ENCODE measurements at regions of chr9 and their contacts with region 1.

Region 1: GRCh38 chr9:70868661-70869652 is 252.5 kb downstream of the TRPM3 start:
- DNase-seq: no peak
- H3K4me3 ChIP-seq: peak overlapping the region; percentile 51
- H3K27ac ChIP-seq: no peak overlapping the region
- H3K4me1 ChIP-seq: no peaks in the 10 kb centered on the region
- H3K27me3 ChIP-seq: peaks cover 22% of the 10 kb centered on the region
- CTCF ChIP-seq: no peak

Region 2: GRCh38 chr9:70747261-70747718 is 121.7 kb before region 1 on chr9:
- intact Hi-C with region 1: no loop called
- DNase-seq: no peak
- H3K4me3 ChIP-seq: no peak overlapping the region
- H3K27ac ChIP-seq: no peak overlapping the region
- H3K4me1 ChIP-seq: no peaks in the 10 kb centered on the region
- H3K27me3 ChIP-seq: no peaks in the 10 kb centered on the region
- CTCF ChIP-seq: no peak

Region 3: GRCh38 chr9:70811638-70812037 is 57.3 kb before region 1 on chr9:
- intact Hi-C with region 1: loop called (anchors 10 kb)
- DNase-seq: no peak
- H3K4me3 ChIP-seq: no peak overlapping the region
- H3K27ac ChIP-seq: no peak overlapping the region
- H3K4me1 ChIP-seq: no peaks in the 10 kb centered on the region
- H3K27me3 ChIP-seq: no peaks in the 10 kb centered on the region
- CTCF ChIP-seq: no peak

Region 4: DNA sequence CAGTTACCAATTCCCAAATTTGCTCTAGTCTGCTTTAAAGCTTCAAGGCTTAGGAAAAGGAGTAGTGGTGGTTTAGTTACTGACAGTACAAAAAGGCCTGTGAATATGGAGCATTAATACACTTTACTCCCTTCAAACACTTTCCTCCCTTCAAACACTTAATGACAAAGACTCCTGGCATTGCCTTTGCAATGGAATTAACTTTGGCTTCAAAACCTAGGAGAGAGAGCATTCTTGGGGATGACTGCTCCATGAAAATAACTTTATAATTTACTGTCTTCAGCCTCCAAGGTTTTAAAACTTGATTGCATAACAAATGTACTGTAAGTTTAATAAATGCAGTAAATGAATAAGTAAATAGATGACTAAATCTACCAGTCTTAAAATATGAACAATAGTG is 66.9 kb after region 1 on chr9:
- intact Hi-C with region 1: no loop called
- DNase-seq: no peak
- H3K4me3 ChIP-seq: no peak overlapping the region
- H3K27ac ChIP-seq: no peak overlapping the region
- H3K4me1 ChIP-seq: no peaks in the 10 kb centered on the region
- H3K27me3 ChIP-seq: no peaks in the 10 kb centered on the region
- CTCF ChIP-seq: no peak

Measured in left ventricle myocardium inferior (tissue), 1 donor.